SK-N-SH (cell line): ENCODE measurements at regions of chr18 and their contacts with region 1.

Region 1: DNA sequence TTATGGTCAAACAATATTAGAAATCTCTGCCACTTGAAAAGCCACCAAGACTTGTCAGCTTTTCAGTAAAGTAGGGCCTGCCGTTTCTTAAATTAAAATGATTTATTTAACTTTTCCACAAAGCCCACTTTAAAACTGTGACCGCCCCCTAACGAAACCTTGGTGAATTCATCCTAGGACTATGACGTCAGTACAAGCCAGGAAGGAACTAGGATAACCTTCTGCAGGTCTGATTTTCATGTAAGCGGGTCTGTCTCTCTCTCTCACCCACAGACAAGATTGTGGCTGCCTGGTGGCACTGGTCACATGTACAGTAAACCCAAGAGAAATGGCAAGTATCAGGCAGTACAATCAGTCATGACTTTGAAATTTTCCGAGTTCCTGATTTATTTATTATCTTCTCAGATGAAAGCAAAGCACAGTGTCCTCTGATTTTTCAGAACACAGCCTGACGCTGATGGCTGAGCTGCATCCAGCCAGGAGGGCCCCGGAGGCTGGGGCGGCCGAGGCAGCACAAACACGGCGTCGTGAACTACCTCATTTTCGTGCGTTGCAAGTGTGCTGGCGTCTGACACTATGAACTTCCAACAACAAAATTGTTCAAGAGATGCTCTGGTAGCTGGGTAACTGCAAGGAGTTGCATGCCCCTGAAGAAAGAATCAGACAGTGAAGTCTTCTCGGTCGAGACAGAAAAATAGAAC is 18.9 kb downstream of the SALL3 start:
- DNase-seq: no peak
- H3K4me3 ChIP-seq: no peak overlapping the region
- H3K27ac ChIP-seq: no peak overlapping the region
- H3K4me1 ChIP-seq: no peaks in the 10 kb centered on the region
- H3K27me3 ChIP-seq: peaks cover 69% of the 10 kb centered on the region
- CTCF ChIP-seq: peak; percentile 23
- EP300 ChIP-seq: no peak
- RAD21 ChIP-seq: no peak

Region 2: DNA sequence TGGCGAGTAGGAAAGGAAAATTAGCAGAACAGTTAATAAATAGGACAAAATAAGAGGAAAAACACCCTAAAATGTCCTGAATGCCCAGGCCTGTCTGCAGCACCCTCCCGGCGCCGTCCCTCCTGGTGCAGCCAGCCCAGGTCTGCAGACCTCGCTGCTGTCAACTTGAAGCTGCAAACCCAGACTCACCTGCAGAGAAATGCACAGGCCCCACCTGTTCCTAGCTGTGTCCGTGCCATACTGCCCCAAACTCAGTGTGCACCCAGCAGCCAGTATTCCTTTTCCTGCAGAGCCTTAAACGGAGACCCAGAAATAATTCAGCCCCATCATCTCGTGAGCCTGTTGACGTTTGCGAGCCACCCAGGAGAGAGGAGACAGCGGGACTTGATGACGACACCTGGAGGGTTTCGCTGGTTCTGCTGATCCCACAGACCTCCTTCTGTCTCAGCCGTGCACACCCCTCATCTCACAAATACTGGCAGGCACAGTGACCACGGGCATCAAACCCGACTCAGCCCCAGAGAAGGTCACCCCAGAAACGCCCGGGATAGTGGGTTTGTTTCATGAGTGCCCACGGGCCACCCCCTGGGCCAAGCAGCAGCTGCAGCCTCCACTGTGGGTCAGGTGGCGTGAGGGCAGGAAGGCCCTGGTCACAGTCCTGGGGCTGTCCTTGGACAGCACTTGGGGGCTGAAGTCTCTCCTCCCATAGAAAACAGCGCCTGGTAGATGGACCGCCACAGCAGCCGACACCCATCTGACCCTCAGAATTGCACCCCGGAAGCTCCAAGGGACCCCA is 258.4 kb before region 1 on chr18:
- CTCF ChIA-PET with region 1: no interaction called
- POLR2A ChIA-PET with region 1: no interaction called
- DNase-seq: no peak
- H3K4me3 ChIP-seq: no peak overlapping the region
- H3K27ac ChIP-seq: no peak overlapping the region
- H3K4me1 ChIP-seq: no peaks in the 10 kb centered on the region
- H3K27me3 ChIP-seq: peaks cover 17% of the 10 kb centered on the region
- CTCF ChIP-seq: no peak
- EP300 ChIP-seq: no peak
- RAD21 ChIP-seq: no peak

Region 3: DNA sequence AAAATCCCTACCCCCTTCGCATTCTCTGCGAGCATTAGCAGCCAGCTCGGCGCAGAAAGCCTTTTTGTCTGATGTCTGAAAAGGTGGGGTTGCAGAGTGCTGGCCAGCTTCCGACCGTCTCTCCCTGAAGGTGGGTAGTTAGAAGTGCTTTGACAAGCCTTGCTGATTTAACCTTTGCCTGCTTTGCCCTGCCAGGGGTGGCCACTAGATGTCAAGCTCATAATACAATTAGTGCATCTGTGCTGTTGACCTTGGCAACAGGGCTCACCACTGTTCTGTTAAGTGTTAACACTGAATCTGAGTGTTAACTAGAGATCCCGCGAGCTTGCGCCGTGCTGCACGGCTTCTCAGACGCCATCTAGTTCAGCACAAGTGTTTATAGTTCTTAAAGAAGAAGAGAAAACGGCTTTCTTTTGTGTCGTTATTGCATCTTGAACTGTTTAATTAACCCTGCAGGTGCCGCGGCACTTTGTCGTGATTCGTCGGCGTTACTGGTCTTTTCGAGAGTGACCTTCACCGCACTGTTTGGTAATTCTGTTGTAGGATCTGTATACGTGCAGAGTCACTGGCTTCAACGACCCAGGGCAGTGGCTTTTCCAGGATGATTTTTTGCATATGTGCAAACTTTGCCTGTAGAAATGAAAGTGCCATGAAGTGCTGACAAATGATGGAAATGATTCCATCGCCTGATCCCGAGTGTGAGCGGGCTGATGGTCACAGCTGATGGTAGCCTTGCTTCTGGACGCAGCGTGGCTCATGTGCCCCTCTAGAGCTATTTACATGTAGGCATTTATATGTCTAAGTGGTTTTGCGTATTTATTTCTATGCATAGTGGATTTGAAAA is 13.4 kb before region 1 on chr18:
- CTCF ChIA-PET with region 1: interaction called, 11 read pairs
- POLR2A ChIA-PET with region 1: no interaction called
- DNase-seq: no peak
- H3K4me3 ChIP-seq: no peak overlapping the region
- H3K27ac ChIP-seq: no peak overlapping the region
- H3K4me1 ChIP-seq: no peaks in the 10 kb centered on the region
- H3K27me3 ChIP-seq: peaks cover 61% of the 10 kb centered on the region
- CTCF ChIP-seq: 0 out of 2 replicates have a peak, but pooled peaks have one; percentile 14
- EP300 ChIP-seq: no peak
- RAD21 ChIP-seq: no peak